BJ (cell line): ENCODE measurements at regions of chr1 and their contacts with region 1.

Region 1: GRCh38 chr1:207797229-207797961 is 45.5 kb downstream of the CD46 start:
- DNase-seq: peak; percentile 55
- H3K4me3 ChIP-seq: no peak overlapping the region
- H3K27me3 ChIP-seq: no peaks in the 10 kb centered on the region
- CTCF ChIP-seq: peak; percentile 78

Region 2: GRCh38 chr1:207502726-207503125 is 294.7 kb before region 1 on chr1:
- CTCF ChIA-PET with region 1: interaction called, 3 read pairs
- POLR2A ChIA-PET with region 1: interaction called, 13 read pairs
- DNase-seq: no peak
- H3K4me3 ChIP-seq: no peak overlapping the region
- H3K27me3 ChIP-seq: peaks cover 5% of the 10 kb centered on the region; the same call in 1 of the 2 replicates
- CTCF ChIP-seq: no peak

Region 3: DNA sequence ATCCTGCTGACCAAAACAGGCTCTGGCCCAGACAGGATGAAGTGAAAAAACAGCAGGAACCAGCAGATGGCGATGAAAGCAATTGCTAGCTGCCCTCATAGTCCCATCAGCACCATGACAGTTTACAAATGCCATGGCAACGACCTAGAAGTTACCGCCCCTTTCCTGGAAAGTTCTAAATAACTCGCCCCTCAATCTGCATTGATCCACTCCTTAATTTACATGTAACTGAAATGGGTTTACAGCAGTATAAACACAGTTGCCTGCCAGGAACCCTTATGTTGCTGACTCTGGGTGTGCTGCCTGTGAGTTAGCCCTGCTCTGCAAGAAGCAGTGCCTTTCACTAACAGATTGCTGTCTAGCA is 218.0 kb before region 1 on chr1:
- CTCF ChIA-PET with region 1: interaction called, 14 read pairs
- POLR2A ChIA-PET with region 1: no interaction called
- DNase-seq: peak; percentile 6
- H3K4me3 ChIP-seq: no peak overlapping the region
- H3K27me3 ChIP-seq: no peaks in the 10 kb centered on the region
- CTCF ChIP-seq: peak; percentile 68

Region 4: GRCh38 chr1:207654320-207654719 is 143.1 kb before region 1 on chr1:
- CTCF ChIA-PET with region 1: interaction called, 18 read pairs
- POLR2A ChIA-PET with region 1: no interaction called
- DNase-seq: no peak
- H3K4me3 ChIP-seq: no peak overlapping the region
- H3K27me3 ChIP-seq: no peaks in the 10 kb centered on the region; the same call in 1 of the 2 replicates
- CTCF ChIP-seq: 0 out of 2 replicates have a peak, but pooled peaks have one; percentile 18

Region 5: DNA sequence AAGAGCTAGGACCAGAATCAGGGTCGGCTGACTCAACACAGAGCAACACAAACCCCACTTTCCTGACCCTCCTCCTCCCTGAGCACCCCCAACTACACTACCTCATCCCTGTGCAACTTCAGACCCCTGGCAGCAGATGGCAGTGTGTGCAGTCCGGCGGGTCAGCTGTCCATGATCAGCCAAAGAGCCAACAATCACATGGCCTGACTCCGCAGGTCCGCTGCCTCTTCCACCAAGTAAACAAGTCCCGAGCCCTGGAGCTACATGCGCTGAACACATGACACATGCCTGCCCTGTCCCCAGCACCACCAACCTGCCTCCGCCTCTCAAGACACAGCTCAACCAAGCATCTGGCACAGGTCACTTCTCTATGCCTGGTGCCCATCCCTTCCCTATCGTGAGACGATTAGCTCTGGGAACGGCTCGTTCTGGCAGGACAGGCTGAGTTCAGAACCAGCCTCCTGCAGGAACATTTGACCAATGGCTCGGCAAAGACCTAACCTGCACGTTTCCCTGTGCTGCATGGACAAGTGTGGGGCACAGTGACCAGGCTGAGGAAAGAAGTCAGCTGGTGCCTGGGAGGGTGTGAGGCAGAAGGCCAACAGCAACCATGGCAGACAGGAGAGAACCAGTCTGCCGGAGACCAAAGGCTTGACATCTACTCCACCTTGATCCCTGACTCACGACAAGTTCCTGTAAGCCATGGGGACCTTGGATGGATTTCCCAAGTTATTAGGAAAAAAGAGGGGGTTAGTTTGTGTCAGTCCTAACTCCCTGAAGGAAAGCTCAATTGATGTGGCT is 14.7 kb after region 1 on chr1:
- CTCF ChIA-PET with region 1: interaction called, 17 read pairs
- POLR2A ChIA-PET with region 1: no interaction called
- DNase-seq: no peak
- H3K4me3 ChIP-seq: no peak overlapping the region
- H3K27me3 ChIP-seq: no peaks in the 10 kb centered on the region
- CTCF ChIP-seq: peak; percentile 64

Region 6: GRCh38 chr1:207828485-207829158 is 31.2 kb after region 1 on chr1:
- CTCF ChIA-PET with region 1: interaction called, 10 read pairs
- POLR2A ChIA-PET with region 1: no interaction called
- DNase-seq: peak; percentile 59
- H3K4me3 ChIP-seq: no peak overlapping the region
- H3K27me3 ChIP-seq: no peaks in the 10 kb centered on the region
- CTCF ChIP-seq: peak; percentile 89

Region 7: GRCh38 chr1:207910591-207911354 is 113.4 kb after region 1 on chr1 and contains the start of gene CD34:
- CTCF ChIA-PET with region 1: no interaction called
- POLR2A ChIA-PET with region 1: no interaction called
- DNase-seq: no peak
- H3K4me3 ChIP-seq: peak within 1 kb of the TSS; percentile 34
- H3K27me3 ChIP-seq: peaks cover 7% of the 10 kb centered on the region
- CTCF ChIP-seq: no peak
- polyA plus RNA-seq, gene CD34: 0.87 and 1.2 TPM in 2 replicates

Region 8: DNA sequence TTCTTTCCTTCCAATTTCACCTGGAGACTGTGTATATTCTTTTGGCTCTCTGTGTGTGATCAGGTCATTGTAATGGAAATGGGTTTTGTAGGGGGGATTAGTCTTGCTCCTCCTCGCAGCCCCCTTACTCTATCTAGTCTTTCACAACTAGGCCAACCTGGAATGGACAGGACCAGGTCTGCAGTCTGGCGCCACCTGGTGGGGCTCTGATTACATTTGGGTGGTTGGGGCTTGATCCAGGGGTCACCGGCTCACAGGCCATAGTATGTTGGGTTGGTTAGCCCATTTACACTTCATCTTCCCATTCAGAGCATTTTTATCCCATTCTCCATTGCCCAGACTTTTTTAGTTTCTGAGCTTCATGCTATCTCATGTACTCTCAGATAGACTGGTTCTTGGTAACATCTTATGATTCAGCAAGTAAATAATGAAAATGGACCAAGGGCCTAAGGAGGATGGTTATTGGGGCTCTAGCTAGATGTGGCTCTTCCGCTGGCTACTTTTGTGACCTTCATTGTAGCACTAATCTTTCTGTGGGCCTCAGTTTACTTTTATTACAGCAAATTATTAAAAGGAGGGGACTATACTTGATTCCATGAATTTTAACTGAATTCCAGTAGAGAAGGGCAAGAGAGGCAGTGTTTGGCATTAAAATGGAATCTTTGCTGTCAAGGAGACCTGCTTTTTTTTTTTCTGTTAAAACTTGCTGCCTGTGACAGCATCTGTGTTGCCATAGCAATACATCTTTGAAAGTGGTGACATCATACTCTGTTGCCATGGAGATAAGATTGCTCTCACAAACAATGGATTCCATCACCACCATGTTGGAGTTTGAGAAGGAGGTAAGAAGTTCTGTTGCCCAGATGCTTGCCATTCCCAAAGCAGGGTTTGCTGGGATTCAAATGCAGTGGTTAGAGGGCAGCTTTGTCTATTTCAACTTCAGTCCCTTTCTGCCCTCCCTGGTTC is 296.6 kb after region 1 on chr1:
- CTCF ChIA-PET with region 1: no interaction called
- POLR2A ChIA-PET with region 1: no interaction called
- DNase-seq: peak; percentile 31
- H3K4me3 ChIP-seq: no peak overlapping the region
- H3K27me3 ChIP-seq: no peaks in the 10 kb centered on the region
- CTCF ChIP-seq: peak; percentile 87